ENCODE measurements at regions of chr1 and their contacts with region 1.

Region 1: GRCh38 chr1:231590453-231591198 is 36.0 kb upstream of the DISC1 start:
- DNase-seq: peak; percentile 68
- H3K4me3 Mint-ChIP-seq: no peak overlapping the region
- H3K27ac Mint-ChIP-seq: no peak overlapping the region
- H3K4me1 Mint-ChIP-seq: peaks cover 6% of the 10 kb centered on the region
- H3K27me3 Mint-ChIP-seq: no peaks in the 10 kb centered on the region

Region 2: GRCh38 chr1:231315887-231316286 is 274.7 kb before region 1 on chr1:
- CTCF ChIA-PET with region 1: interaction called, 5 read pairs
- intact Hi-C with region 1: loop called (anchors 1 kb)
- DNase-seq: peak; percentile 62
- H3K4me3 Mint-ChIP-seq: no peak overlapping the region
- H3K27ac Mint-ChIP-seq: no peak overlapping the region
- H3K4me1 Mint-ChIP-seq: no peaks in the 10 kb centered on the region
- H3K27me3 Mint-ChIP-seq: no peaks in the 10 kb centered on the region

Region 3: GRCh38 chr1:232090816-232091215 is 500.2 kb after region 1 on chr1:
- CTCF ChIA-PET with region 1: no interaction called
- intact Hi-C with region 1: no loop called
- DNase-seq: no peak
- H3K4me3 Mint-ChIP-seq: no peak overlapping the region
- H3K27ac Mint-ChIP-seq: no peak overlapping the region
- H3K4me1 Mint-ChIP-seq: no peaks in the 10 kb centered on the region
- H3K27me3 Mint-ChIP-seq: peaks cover 2% of the 10 kb centered on the region